ENCODE measurements at regions of chr2 and their contacts with region 1.

Region 1: GRCh38 chr2:43877782-43878464 is 39.2 kb downstream of the ABCG8 start:
- DNase-seq: peak; percentile 51
- H3K4me3 Mint-ChIP-seq: no peak overlapping the region
- H3K27ac Mint-ChIP-seq: no peak overlapping the region
- H3K4me1 Mint-ChIP-seq: peaks cover 7% of the 10 kb centered on the region
- H3K27me3 Mint-ChIP-seq: peaks cover under 1% of the 10 kb centered on the region

Region 2: GRCh38 chr2:43611987-43612894 is 265.7 kb before region 1 on chr2:
- intact Hi-C with region 1: loop called (anchors 10 kb)
- DNase-seq: peak; percentile 60
- H3K4me3 Mint-ChIP-seq: no peak overlapping the region
- H3K27ac Mint-ChIP-seq: no peak overlapping the region
- H3K4me1 Mint-ChIP-seq: peaks cover 5% of the 10 kb centered on the region
- H3K27me3 Mint-ChIP-seq: peaks cover 9% of the 10 kb centered on the region

Region 3: GRCh38 chr2:43950383-43951008 is 72.6 kb after region 1 on chr2:
- intact Hi-C with region 1: loop called (anchors 5 kb)
- DNase-seq: no peak
- H3K4me3 Mint-ChIP-seq: no peak overlapping the region
- H3K27ac Mint-ChIP-seq: no peak overlapping the region
- H3K4me1 Mint-ChIP-seq: no peaks in the 10 kb centered on the region
- H3K27me3 Mint-ChIP-seq: no peaks in the 10 kb centered on the region